Sigmoid colon (tissue), 7 donors: ENCODE measurements at regions of chr4 and their contacts with region 1.

Region 1: DNA sequence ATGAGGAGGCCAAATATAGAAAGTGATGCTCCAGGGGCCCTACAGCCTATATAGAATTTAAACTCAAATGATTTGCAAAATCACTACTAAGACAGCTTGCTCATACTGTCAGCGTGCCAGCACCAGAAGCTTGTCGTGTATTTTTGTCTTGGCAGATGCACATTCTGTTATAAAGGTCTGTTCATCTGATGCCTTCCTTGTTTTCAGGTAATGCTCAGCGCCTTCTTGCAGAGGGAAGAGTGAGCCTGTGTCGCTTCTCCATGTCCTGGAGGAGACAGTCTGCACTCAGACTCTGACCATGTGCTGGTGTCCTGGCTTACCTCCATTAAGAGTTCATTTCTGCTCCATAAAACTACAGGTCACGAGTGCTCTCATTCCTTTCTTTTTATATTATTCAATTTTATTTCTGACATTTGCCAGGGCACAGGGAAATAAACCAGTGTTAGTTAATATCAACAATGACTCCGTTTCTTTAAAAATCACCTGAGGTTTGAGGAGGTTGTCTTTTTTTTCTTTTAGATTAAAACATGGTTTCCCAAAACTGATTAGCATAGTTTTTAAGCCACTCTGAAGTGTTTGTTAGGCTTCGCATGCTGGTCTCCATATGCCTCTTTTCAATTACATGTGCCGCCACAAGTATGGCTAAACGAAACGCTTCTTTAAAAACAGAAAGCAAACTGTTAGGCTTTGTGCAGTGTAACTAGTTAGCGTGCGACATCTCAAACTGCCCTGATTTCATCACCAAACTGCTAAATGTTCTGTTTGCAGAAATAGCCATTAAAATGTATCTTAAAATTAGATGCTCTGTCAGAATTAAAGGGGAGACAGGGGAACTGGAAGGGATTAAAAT is 215.2 kb upstream of the GK2 start:
- DNase-seq: peak; percentile 73
- H3K4me3 ChIP-seq: peak overlapping the region in 3 of 4 donors; percentile 20 to 37 (median 30)
- H3K27ac ChIP-seq: peak overlapping the region; percentile 73 to 82 (median 78)
- H3K4me1 ChIP-seq: peaks cover 0 to 59% (median 36%) of the 10 kb centered on the region in 4 donors
- H3K27me3 ChIP-seq: no peaks in the 10 kb centered on the region
- CTCF ChIP-seq: no peak
- EP300 ChIP-seq: peak in 3 of 4 donors; percentile 70 to 85 (median 73)
- POLR2A ChIP-seq: no peak

Region 2: GRCh38 chr4:79357365-79357764 is 265.9 kb before region 1 on chr4:
- intact Hi-C with region 1: no loop called
- DNase-seq: no peak
- H3K4me3 ChIP-seq: no peak overlapping the region
- H3K27ac ChIP-seq: no peak overlapping the region
- H3K4me1 ChIP-seq: peaks cover 0 to 9% (median 3%) of the 10 kb centered on the region in 4 donors
- H3K27me3 ChIP-seq: no peaks in the 10 kb centered on the region
- CTCF ChIP-seq: no peak
- EP300 ChIP-seq: no peak
- POLR2A ChIP-seq: no peak

Region 3: DNA sequence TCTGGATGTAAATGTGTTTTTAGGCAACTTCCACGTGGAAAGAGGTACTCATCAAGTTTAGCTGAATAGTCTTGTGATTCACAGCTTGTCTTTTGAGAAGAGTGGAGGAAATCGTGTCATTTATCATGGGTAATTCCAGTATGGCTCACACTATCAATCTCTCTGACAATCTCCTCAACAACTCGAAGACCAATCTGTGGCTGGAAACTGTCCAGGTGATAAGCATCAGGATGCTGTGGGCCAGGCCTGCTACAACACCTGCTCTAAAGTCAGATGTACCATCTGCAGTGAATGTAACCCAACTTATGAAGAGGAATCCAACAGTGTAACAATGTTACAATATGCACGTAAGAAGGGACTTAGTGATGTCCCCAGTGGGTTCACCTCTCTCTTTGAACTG is 83.1 kb before region 1 on chr4:
- intact Hi-C with region 1: no loop called
- DNase-seq: no peak
- H3K4me3 ChIP-seq: no peak overlapping the region
- H3K27ac ChIP-seq: no peak overlapping the region
- H3K4me1 ChIP-seq: no peaks in the 10 kb centered on the region
- H3K27me3 ChIP-seq: no peaks in the 10 kb centered on the region
- CTCF ChIP-seq: no peak
- EP300 ChIP-seq: no peak
- POLR2A ChIP-seq: no peak

Region 4: GRCh38 chr4:79823148-79823763 is 200.0 kb after region 1 on chr4:
- intact Hi-C with region 1: loop called (anchors 10 kb)
- DNase-seq: peak; percentile 89
- H3K4me3 ChIP-seq: no peak overlapping the region
- H3K27ac ChIP-seq: peak overlapping the region; percentile 71 to 83 (median 80)
- H3K4me1 ChIP-seq: peaks cover 0 to 24% (median 19%) of the 10 kb centered on the region in 4 donors
- H3K27me3 ChIP-seq: no peaks in the 10 kb centered on the region
- CTCF ChIP-seq: no peak
- EP300 ChIP-seq: peak; percentile 46 to 90 (median 59)
- POLR2A ChIP-seq: no peak